Uterus (tissue), 4 donors: ENCODE measurements at regions of chr17 and their contacts with region 1.

Region 1: DNA sequence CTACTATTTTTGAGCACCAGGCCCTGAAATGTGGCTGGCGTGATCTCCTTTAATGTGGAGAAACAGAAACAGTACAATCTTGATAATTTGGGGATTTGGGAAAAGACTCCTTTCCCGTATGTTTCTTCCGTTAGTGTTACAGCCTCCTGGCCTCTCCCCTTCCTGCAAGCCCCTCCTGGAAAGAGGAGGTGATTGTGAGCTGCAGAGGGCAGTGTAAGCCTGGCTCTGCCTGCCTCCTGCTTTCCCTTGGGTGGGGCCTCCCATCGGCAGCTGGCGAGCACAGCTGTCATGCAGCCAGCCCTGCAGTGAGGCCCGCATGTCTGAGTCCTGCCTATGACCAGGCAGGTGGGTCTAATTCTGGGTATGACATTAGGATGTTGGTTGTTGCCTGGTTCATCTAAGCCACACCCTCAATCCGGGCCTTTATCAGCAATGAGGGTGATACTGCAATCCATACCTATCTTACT is 48.7 kb upstream of the WSB1 start:
- DNase-seq: peak; percentile 83 to 87
- H3K4me3 ChIP-seq: no peak overlapping the region
- H3K27ac ChIP-seq: peak overlapping the region; percentile 84 to 91
- H3K4me1 ChIP-seq: peaks cover 3 to 5% of the 10 kb centered on the region in 2 donors
- H3K27me3 ChIP-seq: no peaks in the 10 kb centered on the region
- CTCF ChIP-seq: peak; percentile 66 to 79 (median 76)
- POLR2A ChIP-seq: no peak

Region 2: DNA sequence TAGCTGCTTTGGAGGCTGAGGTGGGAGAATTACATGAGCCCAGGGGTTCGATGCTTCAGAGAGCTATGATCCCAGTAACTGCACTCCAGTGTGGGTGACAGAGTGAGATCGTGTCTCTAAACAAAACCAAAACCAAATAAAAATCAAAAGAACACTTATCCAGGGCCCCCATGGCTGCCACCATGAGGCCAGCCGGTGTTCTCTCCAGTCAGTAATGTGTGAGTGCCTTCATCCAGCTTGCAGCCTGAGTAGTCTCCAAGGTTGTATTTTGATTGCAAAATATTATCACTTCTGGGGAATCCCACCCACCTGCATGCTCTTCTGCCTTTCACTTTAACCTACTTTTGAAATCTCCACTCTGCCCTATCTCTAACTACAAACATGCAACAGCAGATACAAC is 172.4 kb before region 1 on chr17:
- intact Hi-C with region 1: no loop called
- DNase-seq: no peak
- H3K4me3 ChIP-seq: no peak overlapping the region
- H3K27ac ChIP-seq: no peak overlapping the region
- H3K4me1 ChIP-seq: no peaks in the 10 kb centered on the region
- H3K27me3 ChIP-seq: no peaks in the 10 kb centered on the region
- CTCF ChIP-seq: no peak
- POLR2A ChIP-seq: no peak

Region 3: GRCh38 chr17:27293898-27294688 is 48.8 kb after region 1 on chr17 and contains the start of gene WSB1:
- intact Hi-C with region 1: loop called (anchors 5 kb)
- DNase-seq: peak; percentile 93 to 95
- H3K4me3 ChIP-seq: peak within 1 kb of the TSS; percentile 69 to 89
- H3K27ac ChIP-seq: peak within 1 kb of the TSS; percentile 98 to 99
- H3K4me1 ChIP-seq: peaks cover 0 to 8% of the 10 kb centered on the region in 2 donors
- H3K27me3 ChIP-seq: no peaks in the 10 kb centered on the region
- CTCF ChIP-seq: peak in 3 of 4 experiments; percentile 10 to 31 (median 18)
- POLR2A ChIP-seq: peak; percentile 99
- total RNA-seq, gene WSB1: 140 to 421 (median 354) TPM

Region 4: DNA sequence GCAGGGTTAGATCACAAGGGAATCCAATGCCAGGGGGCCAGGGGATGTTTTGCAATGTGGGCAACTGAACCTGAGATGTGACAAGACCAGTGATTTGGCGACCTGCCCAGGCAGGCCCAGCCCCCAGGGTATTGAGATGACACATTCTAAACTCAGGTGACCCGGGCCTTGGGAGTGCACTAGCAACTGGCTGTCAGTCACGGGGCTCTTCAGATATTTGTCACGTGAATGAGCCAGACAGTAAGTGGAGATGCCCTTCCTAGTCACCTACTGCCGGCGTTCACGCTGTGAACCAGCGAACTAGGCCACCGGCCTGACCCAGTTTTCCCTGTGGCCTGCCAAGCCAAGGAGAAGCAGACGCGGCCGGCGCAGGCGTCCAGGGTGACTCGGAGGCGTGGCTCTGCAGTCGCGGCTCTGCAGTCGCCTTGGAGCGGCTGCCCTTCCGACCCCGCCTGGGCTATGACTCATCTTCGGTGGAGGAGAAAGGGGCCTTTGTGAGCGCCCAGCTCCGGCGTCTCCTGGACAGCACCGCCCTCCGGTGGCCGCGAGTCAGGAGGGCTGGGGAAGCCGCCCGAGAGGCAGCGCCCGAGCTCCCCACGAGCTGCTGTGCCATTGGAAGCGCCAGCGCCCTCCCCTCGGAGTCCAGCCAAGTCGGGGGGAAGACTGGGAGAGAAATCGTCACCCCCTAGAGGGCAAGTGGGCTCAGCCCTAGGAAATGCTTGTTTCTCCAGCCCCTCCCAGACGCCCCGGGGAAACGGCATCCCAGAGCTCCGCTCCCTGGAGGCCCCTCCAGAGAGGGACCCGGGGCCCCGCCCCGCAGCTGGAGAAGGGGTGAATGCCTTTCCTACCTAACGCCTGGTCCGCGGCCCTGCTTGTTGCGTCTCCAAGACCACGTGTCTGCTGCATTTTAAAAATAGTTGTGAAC is 87.5 kb after region 1 on chr17:
- intact Hi-C with region 1: loop called (anchors 2 kb)
- DNase-seq: peak; percentile 98 to 99
- H3K4me3 ChIP-seq: peak overlapping the region; percentile 42 to 50
- H3K27ac ChIP-seq: peak overlapping the region; percentile 92 to 97
- H3K4me1 ChIP-seq: peaks cover 0 to 6% of the 10 kb centered on the region in 2 donors
- H3K27me3 ChIP-seq: no peaks in the 10 kb centered on the region
- CTCF ChIP-seq: peak; percentile 89 to 97 (median 96)
- POLR2A ChIP-seq: peak in 1 of 2 donors; percentile 58